PC-9 (cell line): ENCODE measurements at regions of chr7 and their contacts with region 1.

Region 1: GRCh38 chr7:151304856-151305255 is 36.8 kb upstream of the NUB1 start:
- DNase-seq: no peak
- H3K4me3 ChIP-seq: no peak overlapping the region
- H3K27ac ChIP-seq: no peak overlapping the region
- H3K4me1 ChIP-seq: no peaks in the 10 kb centered on the region
- H3K27me3 ChIP-seq: peaks cover 96% of the 10 kb centered on the region
- CTCF ChIP-seq: no peak

Region 2: GRCh38 chr7:150448789-150449147 is 856.1 kb before region 1 on chr7:
- CTCF ChIA-PET with region 1: interaction called, 3 read pairs
- POLR2A ChIA-PET with region 1: no interaction called
- intact Hi-C with region 1: loop called (anchors 10 kb)
- DNase-seq: peak in 1 of 2 experiments; percentile 73
- H3K4me3 ChIP-seq: no peak overlapping the region
- H3K27ac ChIP-seq: no peak overlapping the region
- H3K4me1 ChIP-seq: no peaks in the 10 kb centered on the region
- H3K27me3 ChIP-seq: peaks cover 80% of the 10 kb centered on the region
- CTCF ChIP-seq: peak; percentile 95

Region 3: GRCh38 chr7:151123822-151124464 is 180.9 kb before region 1 on chr7:
- CTCF ChIA-PET with region 1: interaction called, 4 read pairs
- POLR2A ChIA-PET with region 1: no interaction called
- intact Hi-C with region 1: loop called (anchors 1 kb)
- DNase-seq: peak; percentile 55 to 86
- H3K4me3 ChIP-seq: no peak overlapping the region
- H3K27ac ChIP-seq: no peak overlapping the region
- H3K4me1 ChIP-seq: no peaks in the 10 kb centered on the region
- H3K27me3 ChIP-seq: no peaks in the 10 kb centered on the region
- CTCF ChIP-seq: peak; percentile 99

Region 4: GRCh38 chr7:151244196-151244840 is 60.5 kb before region 1 on chr7:
- CTCF ChIA-PET with region 1: interaction called, 12 read pairs
- POLR2A ChIA-PET with region 1: no interaction called
- intact Hi-C with region 1: no loop called
- DNase-seq: peak in 1 of 2 experiments; percentile 44
- H3K4me3 ChIP-seq: no peak overlapping the region
- H3K27ac ChIP-seq: no peak overlapping the region
- H3K4me1 ChIP-seq: no peaks in the 10 kb centered on the region; the same call in 1 of the 2 replicates
- H3K27me3 ChIP-seq: peaks cover 25% of the 10 kb centered on the region
- CTCF ChIP-seq: peak; percentile 95

Region 5: GRCh38 chr7:151368136-151368571 is 63.3 kb after region 1 on chr7:
- CTCF ChIA-PET with region 1: no interaction called
- POLR2A ChIA-PET with region 1: no interaction called
- intact Hi-C with region 1: no loop called
- DNase-seq: peak; percentile 57 to 87
- H3K4me3 ChIP-seq: no peak overlapping the region
- H3K27ac ChIP-seq: no peak overlapping the region
- H3K4me1 ChIP-seq: peaks cover 4% of the 10 kb centered on the region
- H3K27me3 ChIP-seq: no peaks in the 10 kb centered on the region
- CTCF ChIP-seq: peak; percentile 93

Region 6: DNA sequence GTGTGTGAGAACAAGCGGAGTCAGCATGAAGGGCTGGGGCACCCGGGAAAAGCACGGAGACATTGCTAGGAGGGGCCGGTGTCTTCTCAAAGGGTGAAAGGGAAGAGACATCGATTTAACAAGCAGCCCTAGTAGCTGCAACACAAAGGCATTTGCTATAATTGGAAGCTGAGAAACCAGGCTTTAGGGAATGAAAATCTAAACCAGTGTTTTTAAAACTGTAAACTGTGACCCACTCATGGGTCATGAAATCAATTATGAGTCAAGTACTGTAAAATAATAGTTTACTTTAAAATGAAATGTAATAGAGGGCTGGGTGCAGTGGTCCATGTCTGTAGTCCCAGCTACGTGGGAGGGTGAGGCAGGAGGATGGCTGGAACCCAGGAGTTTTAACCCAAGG is 343.6 kb after region 1 on chr7:
- CTCF ChIA-PET with region 1: no interaction called
- POLR2A ChIA-PET with region 1: no interaction called
- intact Hi-C with region 1: no loop called
- DNase-seq: no peak
- H3K4me3 ChIP-seq: no peak overlapping the region
- H3K27ac ChIP-seq: no peak overlapping the region
- H3K4me1 ChIP-seq: peaks cover 19% of the 10 kb centered on the region
- H3K27me3 ChIP-seq: no peaks in the 10 kb centered on the region
- CTCF ChIP-seq: no peak